ENCODE measurements at regions of chr13 and their contacts with region 1.

Region 1: DNA sequence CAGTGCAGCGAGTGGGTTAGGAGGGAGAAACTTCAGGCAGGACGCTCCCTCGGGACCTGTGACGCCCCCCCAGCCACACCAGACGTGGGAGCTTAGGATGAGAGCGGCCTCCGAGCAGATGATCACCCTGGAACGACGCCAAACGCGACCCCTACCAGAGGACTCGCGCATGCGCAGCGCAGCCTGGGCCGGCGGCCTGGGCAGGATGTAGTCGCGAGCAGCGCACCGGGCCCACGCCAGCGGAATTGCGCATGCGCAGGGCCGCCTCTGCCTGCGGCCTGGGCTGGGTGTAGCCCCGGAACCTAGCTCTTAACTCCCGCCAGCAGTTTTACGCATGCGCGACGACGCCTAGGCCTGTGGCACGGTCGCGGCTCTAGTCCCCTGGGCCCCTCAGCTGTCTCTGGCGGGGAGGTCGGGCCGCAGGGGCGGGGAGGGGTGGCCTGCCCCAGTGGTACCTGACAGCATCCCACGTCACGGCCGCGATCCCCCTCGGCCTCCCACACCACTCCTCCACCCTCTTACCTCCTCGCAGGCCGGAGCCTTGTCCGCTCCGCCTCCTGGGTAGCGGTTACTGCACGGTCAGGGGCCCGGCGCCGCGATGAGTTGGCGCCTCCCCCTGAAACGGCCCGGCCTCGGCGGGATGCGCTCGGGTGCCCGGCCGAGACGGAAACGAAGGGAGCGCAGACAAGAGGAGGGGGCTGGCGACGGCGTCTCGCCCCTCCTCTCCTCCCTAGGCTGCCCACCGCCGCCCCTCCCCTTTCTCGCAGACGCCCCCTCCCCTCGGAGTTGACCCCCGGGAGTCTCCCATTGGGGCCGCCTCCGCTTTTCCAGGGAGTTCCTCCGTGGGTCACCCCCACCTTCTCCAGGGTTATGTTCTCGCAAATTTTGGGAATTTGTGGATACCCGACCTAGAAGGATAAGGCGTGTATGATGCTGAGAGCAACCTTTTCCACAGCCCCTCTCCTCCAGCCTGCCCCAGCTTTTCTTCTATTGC is at the start of gene RCBTB2:
- DNase-seq: peak; percentile 100
- ATAC-seq: peak; percentile 99
- H3K4me3 ChIP-seq: peak within 1 kb of the TSS; percentile 55 to 69
- H3K27ac ChIP-seq: peak within 1 kb of the TSS; percentile 68 to 96
- H3K4me1 ChIP-seq: peaks cover 0 to 5% of the 10 kb centered on the region in 2 donors
- H3K27me3 ChIP-seq: no peaks in the 10 kb centered on the region
- total RNA-seq, gene RCBTB2: 12.6 to 25.7 TPM

Region 2: GRCh38 chr13:48043789-48044503 is 488.9 kb before region 1 on chr13:
- intact Hi-C with region 1: loop called in 1 of 2 experiments (anchors 10 kb)
- DNase-seq: no peak
- ATAC-seq: no peak
- H3K4me3 ChIP-seq: no peak overlapping the region
- H3K27ac ChIP-seq: peak overlapping the region in 1 of 2 donors; percentile 62
- H3K4me1 ChIP-seq: peaks cover 0 to 2% of the 10 kb centered on the region in 2 donors
- H3K27me3 ChIP-seq: no peaks in the 10 kb centered on the region

Region 3: DNA sequence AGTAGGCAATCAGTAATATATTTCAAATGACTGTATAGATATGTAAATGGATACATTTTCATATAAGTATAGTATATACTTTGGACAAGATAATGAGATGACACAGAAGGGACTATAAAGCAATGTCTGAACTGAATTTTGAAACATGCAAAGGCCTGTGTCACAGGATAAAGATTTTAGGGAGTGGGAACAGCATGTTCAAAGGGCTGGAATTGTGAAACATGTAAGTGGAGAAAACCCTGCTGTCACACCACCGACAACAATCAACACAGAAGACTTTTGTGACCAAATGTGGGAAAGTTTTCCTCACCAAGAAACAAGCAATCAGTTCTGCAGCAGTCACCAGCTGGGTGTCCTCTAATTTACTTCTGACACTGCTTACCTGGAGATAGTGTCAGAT is 162.8 kb before region 1 on chr13:
- intact Hi-C with region 1: no loop called
- DNase-seq: no peak
- ATAC-seq: no peak
- H3K4me3 ChIP-seq: no peak overlapping the region
- H3K27ac ChIP-seq: no peak overlapping the region
- H3K4me1 ChIP-seq: no peaks in the 10 kb centered on the region
- H3K27me3 ChIP-seq: no peaks in the 10 kb centered on the region

Region 4: DNA sequence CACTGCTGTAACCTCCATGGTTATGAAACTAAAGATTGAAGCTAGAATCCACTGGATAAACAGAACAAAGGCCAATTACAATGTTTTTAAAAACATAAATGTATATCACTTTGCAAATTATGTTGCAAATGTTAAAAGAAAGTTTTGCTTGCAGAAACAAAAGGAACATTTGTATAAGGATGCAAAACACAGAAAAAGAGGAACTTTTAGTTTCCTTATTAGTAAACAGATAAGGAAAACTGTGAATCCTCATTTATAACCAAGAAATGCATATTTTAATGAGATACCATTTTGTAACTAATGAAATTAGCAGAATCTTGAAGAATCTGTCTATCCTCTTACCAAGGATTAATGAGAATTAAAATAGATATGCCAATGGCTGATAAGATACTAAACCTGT is 152.2 kb before region 1 on chr13:
- intact Hi-C with region 1: no loop called
- DNase-seq: no peak
- ATAC-seq: no peak
- H3K4me3 ChIP-seq: no peak overlapping the region
- H3K27ac ChIP-seq: no peak overlapping the region
- H3K4me1 ChIP-seq: no peaks in the 10 kb centered on the region
- H3K27me3 ChIP-seq: no peaks in the 10 kb centered on the region

Region 5: GRCh38 chr13:48400850-48401291 is 131.9 kb before region 1 on chr13:
- intact Hi-C with region 1: loop called in 1 of 2 experiments (anchors 5 kb)
- DNase-seq: no peak
- ATAC-seq: peak; percentile 83
- H3K4me3 ChIP-seq: no peak overlapping the region
- H3K27ac ChIP-seq: peak overlapping the region in 1 of 2 donors; percentile 18
- H3K4me1 ChIP-seq: peaks cover 2 to 3% of the 10 kb centered on the region in 2 donors
- H3K27me3 ChIP-seq: no peaks in the 10 kb centered on the region

Region 6: GRCh38 chr13:48431987-48432615 is 100.7 kb before region 1 on chr13:
- intact Hi-C with region 1: no loop called
- DNase-seq: no peak
- ATAC-seq: no peak
- H3K4me3 ChIP-seq: no peak overlapping the region
- H3K27ac ChIP-seq: no peak overlapping the region
- H3K4me1 ChIP-seq: peaks cover 0 to 4% of the 10 kb centered on the region in 2 donors
- H3K27me3 ChIP-seq: no peaks in the 10 kb centered on the region

Region 7: GRCh38 chr13:48571126-48571913 is 38.5 kb after region 1 on chr13:
- intact Hi-C with region 1: loop called (anchors 5 kb)
- DNase-seq: no peak
- ATAC-seq: peak; percentile 81
- H3K4me3 ChIP-seq: peak overlapping the region in 1 of 2 donors; percentile 50
- H3K27ac ChIP-seq: peak overlapping the region; percentile 29 to 73
- H3K4me1 ChIP-seq: peaks cover 0 to 2% of the 10 kb centered on the region in 2 donors
- H3K27me3 ChIP-seq: no peaks in the 10 kb centered on the region

Measured in aorta (tissue), 5 donors.